Caco-2 (cell line): ENCODE measurements at regions of chr10 and their contacts with region 1.

Region 1: GRCh38 chr10:133329491-133330202 is 7.0 kb downstream of the CALY start:
- DNase-seq: peak; percentile 88 to 93
- H3K4me3 ChIP-seq: peak overlapping the region; percentile 11; the same call in 1 of the 2 replicates
- H3K4me3 Mint-ChIP-seq: peak overlapping the region; percentile 66
- H3K27ac Mint-ChIP-seq: no peak overlapping the region
- H3K4me1 ChIP-seq: peaks cover 12% of the 10 kb centered on the region
- H3K4me1 Mint-ChIP-seq: peaks cover 7% of the 10 kb centered on the region
- H3K27me3 ChIP-seq: 0 out of 2 replicates have a peak, but pooled peaks cover 3% of the 10 kb centered on the region
- H3K27me3 Mint-ChIP-seq: peaks cover 32% of the 10 kb centered on the region
- CTCF ChIP-seq: peak; percentile 98 to 99

Region 2: DNA sequence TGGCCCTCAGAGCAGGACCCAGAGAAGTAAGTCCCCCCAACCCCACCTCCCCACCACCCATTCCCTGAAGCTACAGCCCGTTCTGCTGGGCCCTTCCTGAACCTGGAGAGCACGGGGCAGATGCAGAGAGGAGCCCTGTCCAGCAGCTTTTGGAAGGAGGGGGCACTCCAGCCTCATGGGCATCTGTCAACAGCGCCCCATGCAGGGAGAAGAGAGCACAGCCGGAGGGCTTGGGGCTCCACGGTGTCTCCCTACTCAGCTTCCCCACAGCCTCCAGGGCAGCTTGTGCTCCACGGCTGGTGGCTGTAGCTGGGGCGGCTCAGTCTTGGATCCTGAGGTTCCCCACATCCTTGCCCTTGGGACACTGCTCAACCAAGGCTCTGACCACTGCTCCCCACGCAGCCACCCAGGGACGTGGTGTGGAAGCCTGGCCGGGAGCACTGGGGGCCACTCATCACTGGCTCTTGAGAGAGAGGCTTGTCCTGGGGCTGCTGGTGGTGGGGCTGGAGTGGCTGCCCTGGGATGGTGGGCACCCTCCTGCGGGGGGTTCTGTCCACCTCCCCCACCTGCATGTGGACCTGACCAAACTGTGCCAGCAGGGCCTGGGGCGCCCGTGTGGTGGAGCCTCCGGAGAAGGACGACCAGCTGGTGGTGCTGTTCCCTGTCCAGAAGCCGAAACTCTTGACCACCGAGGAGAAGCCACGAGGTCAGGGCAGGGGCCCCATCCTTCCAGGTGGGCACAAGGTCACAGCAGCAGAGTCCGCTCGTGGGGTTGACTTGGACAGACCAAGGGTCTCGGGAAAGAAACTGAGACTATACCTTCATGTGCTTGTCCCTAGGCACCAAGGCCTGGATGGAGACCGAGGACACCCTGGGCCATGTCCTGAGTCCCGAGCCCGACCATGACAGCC is 22.0 kb after region 1 on chr10:
- CTCF ChIA-PET with region 1: interaction called, 11 read pairs
- POLR2A ChIA-PET with region 1: interaction called, 4 read pairs
- intact Hi-C with region 1: loop called (anchors 2 kb)
- DNase-seq: no peak
- H3K4me3 ChIP-seq: no peak overlapping the region
- H3K4me3 Mint-ChIP-seq: peak overlapping the region; percentile 17
- H3K27ac Mint-ChIP-seq: peak overlapping the region; percentile 65
- H3K4me1 ChIP-seq: peaks cover 52% of the 10 kb centered on the region
- H3K4me1 Mint-ChIP-seq: peaks cover 8% of the 10 kb centered on the region
- H3K27me3 ChIP-seq: no peaks in the 10 kb centered on the region
- H3K27me3 Mint-ChIP-seq: no peaks in the 10 kb centered on the region
- CTCF ChIP-seq: no peak

Region 3: DNA sequence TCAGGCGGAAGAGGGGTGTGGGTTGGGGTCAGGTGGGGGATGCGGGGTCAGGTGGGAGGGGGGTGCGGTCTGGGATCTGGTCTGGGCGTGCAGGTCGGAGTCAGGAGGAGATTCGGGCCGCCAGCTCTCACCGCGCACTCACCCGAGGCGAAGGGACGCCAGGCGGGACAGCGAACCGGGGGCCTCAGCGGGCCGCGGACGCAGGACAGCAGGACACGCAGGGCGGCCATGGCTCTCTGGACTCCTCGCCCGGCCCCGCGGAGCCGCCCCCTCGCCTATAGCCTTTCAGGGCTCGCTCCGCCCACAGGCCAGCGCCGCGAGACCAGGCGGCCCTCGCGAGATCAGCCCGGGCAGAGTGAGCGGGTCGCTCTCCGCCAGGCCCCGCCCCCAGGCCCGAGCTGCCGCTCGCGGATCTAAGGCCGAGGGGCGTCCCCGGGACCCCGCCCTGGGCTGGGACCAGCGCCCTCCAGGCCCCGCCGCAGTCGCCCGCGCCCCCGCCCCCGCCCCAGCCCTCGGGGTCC is 43.5 kb after region 1 on chr10 and contains the start of gene ECHS1:
- CTCF ChIA-PET with region 1: interaction called, 3 read pairs
- POLR2A ChIA-PET with region 1: no interaction called
- intact Hi-C with region 1: loop called (anchors 1 kb)
- DNase-seq: peak; percentile 96 to 100
- H3K4me3 ChIP-seq: peak within 1 kb of the TSS; percentile 100
- H3K4me3 Mint-ChIP-seq: peak within 1 kb of the TSS; percentile 87
- H3K27ac Mint-ChIP-seq: peak within 1 kb of the TSS; percentile 92
- H3K4me1 ChIP-seq: peaks cover 22% of the 10 kb centered on the region
- H3K4me1 Mint-ChIP-seq: no peaks in the 10 kb centered on the region
- H3K27me3 ChIP-seq: no peaks in the 10 kb centered on the region
- H3K27me3 Mint-ChIP-seq: no peaks in the 10 kb centered on the region
- CTCF ChIP-seq: no peak
- total RNA-seq, gene ECHS1: 232 and 247 TPM in 2 replicates

Region 4: GRCh38 chr10:133394064-133394663 is 64.5 kb after region 1 on chr10 and contains the start of gene MTG1:
- CTCF ChIA-PET with region 1: interaction called, 3 read pairs
- POLR2A ChIA-PET with region 1: no interaction called
- intact Hi-C with region 1: loop called (anchors 5 kb)
- DNase-seq: peak; percentile 95 to 100
- H3K4me3 ChIP-seq: peak within 1 kb of the TSS; percentile 79
- H3K4me3 Mint-ChIP-seq: peak within 1 kb of the TSS; percentile 81
- H3K27ac Mint-ChIP-seq: peak within 1 kb of the TSS; percentile 86
- H3K4me1 ChIP-seq: 0 out of 2 replicates have a peak, but pooled peaks cover 4% of the 10 kb centered on the region
- H3K4me1 Mint-ChIP-seq: no peaks in the 10 kb centered on the region
- H3K27me3 ChIP-seq: no peaks in the 10 kb centered on the region
- H3K27me3 Mint-ChIP-seq: no peaks in the 10 kb centered on the region
- CTCF ChIP-seq: peak in 1 of 2 experiments; percentile 54
- total RNA-seq, gene MTG1: 111 and 113 TPM in 2 replicates

Region 5: DNA sequence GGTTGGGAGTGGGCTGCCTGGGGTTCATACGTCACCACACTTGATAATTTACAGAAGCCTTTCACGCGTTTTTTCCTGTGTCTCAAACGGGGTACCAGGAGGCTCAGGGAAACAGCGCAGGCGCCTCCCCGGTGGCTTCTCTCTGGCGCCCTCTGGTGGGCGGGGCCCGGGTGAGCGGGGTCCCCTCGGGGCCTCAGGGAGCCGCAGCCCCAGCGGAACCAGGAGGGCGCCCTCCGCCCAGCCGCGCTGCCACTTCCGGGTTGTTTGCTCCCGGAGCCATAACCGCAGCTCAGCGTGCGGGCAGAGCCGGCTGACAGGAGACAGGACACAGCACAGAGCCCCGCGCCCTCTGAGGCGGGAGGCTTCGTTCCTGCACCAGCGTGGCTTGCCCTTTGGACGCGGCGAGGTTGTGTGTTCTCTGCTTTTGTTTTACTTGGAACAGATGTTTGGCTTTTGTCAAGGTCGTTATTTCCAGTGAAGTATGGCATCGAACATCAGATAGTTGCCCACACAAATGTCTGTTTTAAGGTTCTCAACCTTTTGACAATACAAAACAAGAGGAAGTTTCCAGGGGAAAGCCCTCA is 190.6 kb after region 1 on chr10:
- CTCF ChIA-PET with region 1: no interaction called
- POLR2A ChIA-PET with region 1: no interaction called
- intact Hi-C with region 1: loop called (anchors 1 kb)
- DNase-seq: peak; percentile 92 to 98
- H3K4me3 ChIP-seq: peak overlapping the region; percentile 61
- H3K4me3 Mint-ChIP-seq: peak overlapping the region; percentile 72
- H3K27ac Mint-ChIP-seq: peak overlapping the region; percentile 30
- H3K4me1 ChIP-seq: peaks cover 11% of the 10 kb centered on the region
- H3K4me1 Mint-ChIP-seq: peaks cover 11% of the 10 kb centered on the region
- H3K27me3 ChIP-seq: no peaks in the 10 kb centered on the region
- H3K27me3 Mint-ChIP-seq: peaks cover 15% of the 10 kb centered on the region
- CTCF ChIP-seq: peak; percentile 96 to 98